MCF 10A (cell line): ENCODE measurements at regions of chr4 and their contacts with region 1.

Region 1: GRCh38 chr4:93199492-93199891 is 629.1 kb upstream of the ATOH1 start:
- DNase-seq: peak; percentile 63
- H3K4me3 Mint-ChIP-seq: no peak overlapping the region
- H3K27ac Mint-ChIP-seq: no peak overlapping the region
- H3K4me1 Mint-ChIP-seq: peaks cover 6% of the 10 kb centered on the region
- H3K27me3 Mint-ChIP-seq: no peaks in the 10 kb centered on the region
- CTCF ChIP-seq: peak; percentile 42

Region 2: GRCh38 chr4:92305148-92305877 is 894.2 kb before region 1 on chr4:
- CTCF ChIA-PET with region 1: interaction called, 6 read pairs
- POLR2A ChIA-PET with region 1: interaction called, 3 read pairs
- intact Hi-C with region 1: loop called (anchors 5 kb)
- DNase-seq: peak; percentile 29
- H3K4me3 Mint-ChIP-seq: peak overlapping the region; percentile 58
- H3K27ac Mint-ChIP-seq: peak overlapping the region; percentile 10
- H3K4me1 Mint-ChIP-seq: peaks cover 15% of the 10 kb centered on the region
- H3K27me3 Mint-ChIP-seq: peaks cover 14% of the 10 kb centered on the region
- CTCF ChIP-seq: no peak

Region 3: GRCh38 chr4:93157994-93158393 is 41.5 kb before region 1 on chr4:
- CTCF ChIA-PET with region 1: interaction called, 22 read pairs
- POLR2A ChIA-PET with region 1: interaction called, 4 read pairs
- intact Hi-C with region 1: loop called (anchors 1 kb)
- DNase-seq: peak; percentile 22
- H3K4me3 Mint-ChIP-seq: no peak overlapping the region
- H3K27ac Mint-ChIP-seq: no peak overlapping the region
- H3K4me1 Mint-ChIP-seq: no peaks in the 10 kb centered on the region
- H3K27me3 Mint-ChIP-seq: no peaks in the 10 kb centered on the region
- CTCF ChIP-seq: peak; percentile 38

Region 4: DNA sequence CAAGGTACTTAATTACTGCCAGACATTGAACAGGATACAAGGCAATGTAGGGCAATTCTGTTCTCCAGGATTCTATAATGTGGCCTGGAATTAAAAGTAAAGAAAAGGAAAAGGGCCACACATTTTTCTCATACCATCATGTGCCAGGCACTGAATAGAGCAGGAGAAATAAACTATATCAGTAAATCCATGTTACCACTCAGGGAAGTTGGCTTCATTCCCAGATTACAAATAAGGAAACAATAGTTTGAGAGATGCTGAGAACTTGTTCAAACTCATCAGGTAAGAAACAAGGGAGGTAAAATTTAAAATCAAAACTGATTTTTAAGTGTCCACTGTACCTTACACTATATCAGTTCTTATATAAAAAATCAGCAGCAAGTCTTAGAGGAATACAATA is 15.9 kb before region 1 on chr4:
- CTCF ChIA-PET with region 1: interaction called, 13 read pairs
- POLR2A ChIA-PET with region 1: no interaction called
- intact Hi-C with region 1: no loop called
- DNase-seq: peak; percentile 77
- H3K4me3 Mint-ChIP-seq: no peak overlapping the region
- H3K27ac Mint-ChIP-seq: peak overlapping the region; percentile 90
- H3K4me1 Mint-ChIP-seq: peaks cover 23% of the 10 kb centered on the region
- H3K27me3 Mint-ChIP-seq: no peaks in the 10 kb centered on the region
- CTCF ChIP-seq: no peak

Region 5: GRCh38 chr4:93320356-93320755 is 120.9 kb after region 1 on chr4:
- CTCF ChIA-PET with region 1: no interaction called
- POLR2A ChIA-PET with region 1: no interaction called
- intact Hi-C with region 1: no loop called
- DNase-seq: no peak
- H3K4me3 Mint-ChIP-seq: no peak overlapping the region
- H3K27ac Mint-ChIP-seq: no peak overlapping the region
- H3K4me1 Mint-ChIP-seq: peaks cover 29% of the 10 kb centered on the region
- H3K27me3 Mint-ChIP-seq: no peaks in the 10 kb centered on the region
- CTCF ChIP-seq: no peak

Region 6: DNA sequence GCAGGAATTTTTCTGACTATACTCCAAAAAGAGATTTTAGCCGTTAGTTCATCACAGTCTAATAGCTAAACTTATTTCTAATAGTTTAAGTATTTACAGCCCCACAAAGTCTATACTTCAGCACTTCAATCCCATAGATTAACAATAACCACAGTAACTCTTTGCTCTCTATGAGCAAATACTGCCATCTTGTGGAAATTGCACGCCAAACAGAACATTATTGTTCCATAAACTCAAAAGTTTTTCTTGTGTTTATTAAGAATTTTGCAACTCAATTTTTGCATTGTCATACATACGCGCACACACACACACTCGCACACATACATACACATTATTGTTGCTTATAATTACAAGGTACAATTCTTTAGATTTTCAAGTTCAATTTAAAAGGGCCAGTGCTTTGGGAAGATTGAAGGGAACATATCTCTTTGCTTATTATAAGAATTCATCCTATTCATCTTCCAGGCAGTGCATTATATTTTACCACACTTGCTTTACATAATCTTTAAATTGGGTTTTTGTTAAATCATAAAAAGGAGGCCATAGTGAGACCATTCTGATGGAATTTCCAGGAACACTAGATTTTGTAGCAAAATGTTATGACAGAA is 565.3 kb after region 1 on chr4:
- CTCF ChIA-PET with region 1: interaction called, 9 read pairs
- POLR2A ChIA-PET with region 1: no interaction called
- intact Hi-C with region 1: loop called (anchors 1 kb)
- DNase-seq: peak; percentile 71
- H3K4me3 Mint-ChIP-seq: no peak overlapping the region
- H3K27ac Mint-ChIP-seq: no peak overlapping the region
- H3K4me1 Mint-ChIP-seq: no peaks in the 10 kb centered on the region
- H3K27me3 Mint-ChIP-seq: no peaks in the 10 kb centered on the region
- CTCF ChIP-seq: peak; percentile 73